ENCODE measurements at regions of chr15 and their contacts with region 1.

Region 1: DNA sequence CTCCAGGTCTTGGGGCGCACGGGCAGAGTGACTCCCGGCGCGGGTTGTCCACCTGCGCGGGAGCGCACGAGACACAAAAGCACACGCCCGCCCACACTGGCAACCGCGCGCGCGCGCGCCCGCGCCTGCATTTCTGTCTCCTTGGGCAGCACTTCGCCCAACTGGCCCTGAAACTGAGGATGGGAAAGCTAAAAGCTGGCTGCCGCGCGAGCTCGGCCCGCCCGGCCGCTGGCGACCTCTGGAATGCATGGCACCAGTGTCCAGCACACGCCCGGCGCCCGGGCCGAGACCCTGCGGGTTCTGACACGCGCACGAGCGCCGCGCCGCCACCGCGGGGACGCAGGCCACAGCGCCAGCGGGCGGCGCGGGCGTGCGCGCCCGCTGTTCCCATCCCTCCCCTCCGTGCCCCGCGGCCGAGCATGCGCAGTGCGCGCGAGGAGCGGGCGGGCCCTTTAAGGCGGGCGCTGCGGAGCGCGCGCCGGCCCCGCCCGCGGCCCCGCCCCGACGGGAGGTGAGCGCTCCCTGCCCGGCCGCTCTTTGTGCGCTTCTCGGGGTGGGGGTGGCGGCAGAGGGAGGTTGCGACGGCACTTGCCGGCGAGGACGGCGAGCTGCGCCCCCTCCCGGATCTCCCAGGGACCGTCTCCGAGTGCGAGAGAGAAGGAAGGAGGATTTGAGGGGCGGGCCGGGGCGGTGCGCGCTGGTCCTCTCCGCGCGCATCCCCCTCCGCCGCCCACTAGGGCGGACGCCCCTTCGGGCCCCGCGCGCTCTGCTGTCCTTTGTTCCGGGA is 1.0 kb upstream of the MEX3B start:
- DNase-seq: peak; percentile 95
- ATAC-seq: peak; percentile 77
- H3K4me3 Mint-ChIP-seq: peak overlapping the region; percentile 81
- H3K27ac Mint-ChIP-seq: peak overlapping the region; percentile 85
- H3K4me1 Mint-ChIP-seq: peaks cover 12% of the 10 kb centered on the region
- H3K27me3 Mint-ChIP-seq: peaks cover 21% of the 10 kb centered on the region

Region 2: GRCh38 chr15:80989518-80990478 is 1057.1 kb before region 1 on chr15 and contains the start of gene MESD:
- CTCF ChIA-PET with region 1: no interaction called
- POLR2A ChIA-PET with region 1: no interaction called
- intact Hi-C with region 1: loop called in 1 of 2 experiments (anchors 1 kb)
- DNase-seq: peak; percentile 99
- ATAC-seq: peak; percentile 99
- H3K4me3 Mint-ChIP-seq: peak within 1 kb of the TSS; percentile 94
- H3K27ac Mint-ChIP-seq: peak within 1 kb of the TSS; percentile 89
- H3K4me1 Mint-ChIP-seq: peaks cover 50% of the 10 kb centered on the region
- H3K27me3 Mint-ChIP-seq: no peaks in the 10 kb centered on the region
- total RNA-seq, gene MESD: 18.6 to 21.7 TPM

Region 3: DNA sequence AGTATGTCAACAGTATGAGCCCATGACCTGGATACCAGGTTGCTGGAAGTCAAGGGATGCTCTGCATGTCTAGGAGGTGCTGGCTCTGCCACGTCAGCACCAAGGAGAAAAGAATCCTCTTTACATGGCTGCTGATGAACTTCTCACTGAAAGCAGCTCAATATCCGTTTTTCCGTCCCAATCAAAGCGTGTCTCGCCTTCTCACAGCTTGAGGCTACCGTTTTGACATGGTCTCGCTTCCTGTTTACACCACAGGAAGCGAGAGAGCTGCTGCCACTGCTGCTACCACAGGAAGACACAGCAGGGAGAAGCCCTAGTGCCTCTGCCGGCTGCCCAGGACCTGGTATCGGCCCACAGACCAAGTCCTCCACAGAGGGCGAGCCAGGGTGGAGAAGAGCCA is 750.2 kb before region 1 on chr15:
- CTCF ChIA-PET with region 1: no interaction called
- POLR2A ChIA-PET with region 1: interaction called, 3 read pairs
- intact Hi-C with region 1: loop called (anchors 2 to 10 kb)
- DNase-seq: peak; percentile 86
- ATAC-seq: peak; percentile 54
- H3K4me3 Mint-ChIP-seq: peak overlapping the region; percentile 94
- H3K27ac Mint-ChIP-seq: peak overlapping the region; percentile 98
- H3K4me1 Mint-ChIP-seq: peaks cover 62% of the 10 kb centered on the region
- H3K27me3 Mint-ChIP-seq: no peaks in the 10 kb centered on the region

Region 4: GRCh38 chr15:81410318-81410753 is 636.5 kb before region 1 on chr15:
- CTCF ChIA-PET with region 1: interaction called, 3 read pairs
- POLR2A ChIA-PET with region 1: no interaction called
- intact Hi-C with region 1: loop called in 1 of 2 experiments (anchors 1 kb)
- DNase-seq: peak; percentile 24
- ATAC-seq: peak; percentile 69
- H3K4me3 Mint-ChIP-seq: no peak overlapping the region
- H3K27ac Mint-ChIP-seq: no peak overlapping the region
- H3K4me1 Mint-ChIP-seq: peaks cover 14% of the 10 kb centered on the region
- H3K27me3 Mint-ChIP-seq: no peaks in the 10 kb centered on the region

Region 5: GRCh38 chr15:81809543-81809942 is 237.3 kb before region 1 on chr15:
- CTCF ChIA-PET with region 1: no interaction called
- POLR2A ChIA-PET with region 1: no interaction called
- intact Hi-C with region 1: no loop called
- DNase-seq: peak; percentile 48
- ATAC-seq: peak; percentile 61
- H3K4me3 Mint-ChIP-seq: no peak overlapping the region
- H3K27ac Mint-ChIP-seq: no peak overlapping the region
- H3K4me1 Mint-ChIP-seq: no peaks in the 10 kb centered on the region
- H3K27me3 Mint-ChIP-seq: no peaks in the 10 kb centered on the region

Region 6: DNA sequence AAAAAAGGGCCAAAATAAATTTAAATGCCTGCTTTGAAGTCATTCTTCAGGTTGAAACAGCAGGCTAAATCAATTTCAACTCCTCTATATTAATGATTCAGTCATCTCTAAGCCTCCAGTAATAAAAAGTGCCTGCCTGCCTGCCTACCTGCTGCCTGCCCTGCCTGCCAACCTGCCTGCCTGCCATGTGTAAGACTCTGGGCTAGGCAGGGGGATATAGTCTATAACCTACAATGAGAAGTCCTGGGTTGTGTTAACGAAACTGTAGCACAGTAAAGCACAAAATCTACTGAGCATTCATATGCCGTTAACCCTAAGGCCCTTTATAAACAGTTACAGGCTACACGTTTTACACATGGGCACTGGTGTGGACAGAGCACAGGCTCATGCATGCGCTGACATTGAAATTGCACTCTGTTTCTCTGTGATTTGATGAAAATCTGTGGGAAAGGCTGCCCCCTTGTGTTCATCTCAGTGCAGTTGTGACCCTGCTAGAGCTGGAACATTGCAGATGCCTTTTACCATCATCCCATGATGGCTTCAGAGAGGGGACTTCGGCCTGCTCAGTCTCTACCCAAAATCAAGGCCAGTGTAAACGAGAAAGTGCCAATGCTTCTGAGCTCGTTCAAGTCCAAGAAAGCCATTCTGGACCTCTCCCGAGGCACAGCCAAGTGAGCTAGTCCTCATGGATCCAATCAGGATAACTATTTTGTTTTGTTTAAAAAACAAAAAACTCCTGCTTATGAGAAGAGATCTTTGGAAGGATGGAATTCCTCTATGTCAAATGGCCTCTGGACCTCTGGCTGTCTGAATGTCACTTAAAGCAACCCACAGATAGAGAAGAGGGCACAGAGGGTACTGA is 151.1 kb after region 1 on chr15:
- CTCF ChIA-PET with region 1: no interaction called
- POLR2A ChIA-PET with region 1: no interaction called
- intact Hi-C with region 1: loop called in 1 of 2 experiments (anchors 2 kb)
- DNase-seq: peak; percentile 75
- ATAC-seq: peak; percentile 80
- H3K4me3 Mint-ChIP-seq: no peak overlapping the region
- H3K27ac Mint-ChIP-seq: no peak overlapping the region
- H3K4me1 Mint-ChIP-seq: no peaks in the 10 kb centered on the region
- H3K27me3 Mint-ChIP-seq: no peaks in the 10 kb centered on the region

Region 7: GRCh38 chr15:83066734-83067637 is 1020.1 kb after region 1 on chr15 and contains the start of gene BTBD1:
- CTCF ChIA-PET with region 1: no interaction called
- POLR2A ChIA-PET with region 1: no interaction called
- intact Hi-C with region 1: loop called in 1 of 2 experiments (anchors 5 kb)
- DNase-seq: peak; percentile 96
- ATAC-seq: peak; percentile 98
- H3K4me3 Mint-ChIP-seq: peak within 1 kb of the TSS; percentile 79
- H3K27ac Mint-ChIP-seq: peak within 1 kb of the TSS; percentile 86
- H3K4me1 Mint-ChIP-seq: peaks cover 20% of the 10 kb centered on the region
- H3K27me3 Mint-ChIP-seq: no peaks in the 10 kb centered on the region
- total RNA-seq, gene BTBD1: 58.3 to 77.6 TPM

Measured in activated CD4-positive, alpha-beta T cell treated with anti-CD3 and anti-CD28 coated beads for 36 hours (primary cell).